Activated CD4-positive, alpha-beta T cell treated with anti-CD3 and anti-CD28 coated beads, Interleukin-2, amount 10 ng/mL, durations not matched to agents 24 days and 14 days (primary cell): ENCODE measurements at regions of chr1 and their contacts with region 1.

Region 1: GRCh38 chr1:67685067-67685557 is at the start of gene GADD45A:
- DNase-seq: peak; percentile 99
- H3K4me3 Mint-ChIP-seq: peak within 1 kb of the TSS; percentile 91
- H3K27ac Mint-ChIP-seq: peak within 1 kb of the TSS; percentile 96
- H3K4me1 Mint-ChIP-seq: peaks cover 35% of the 10 kb centered on the region
- H3K27me3 Mint-ChIP-seq: no peaks in the 10 kb centered on the region
- total RNA-seq, gene GADD45A: 33.4 and 36.7 TPM in 2 replicates

Region 2: DNA sequence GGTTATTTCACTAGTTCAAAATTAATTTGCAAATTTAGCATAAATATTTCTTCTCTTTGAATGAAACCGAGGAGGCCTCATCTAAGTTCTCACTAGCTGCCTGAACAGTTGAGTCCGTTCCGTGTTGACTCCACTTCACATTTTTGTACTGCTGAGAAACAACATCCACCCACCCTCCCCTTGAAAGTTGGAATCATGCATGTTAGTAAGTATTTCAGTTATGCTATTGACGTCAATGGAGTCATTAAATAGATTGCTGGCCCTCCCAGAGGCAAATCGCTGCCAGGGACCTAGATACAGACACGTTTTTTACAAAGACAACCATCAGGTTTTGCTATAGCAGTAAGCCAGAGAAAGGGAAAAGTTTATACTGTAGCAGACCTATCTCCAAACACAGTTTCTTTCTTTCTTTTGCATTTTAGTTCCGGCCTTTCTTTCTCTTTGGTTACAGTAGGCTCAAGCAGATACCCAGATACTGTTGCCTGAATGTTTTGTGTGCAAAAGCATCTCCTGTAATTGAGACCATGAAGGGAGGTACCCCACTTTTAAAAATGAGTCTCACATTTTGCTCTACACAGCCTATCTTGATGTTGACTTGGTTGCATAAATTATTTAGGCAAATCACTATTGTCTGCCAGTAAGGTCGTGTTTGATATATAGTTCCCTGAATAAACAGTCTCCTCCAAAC is 1413.8 kb before region 1 on chr1:
- intact Hi-C with region 1: loop called (anchors 10 kb)
- DNase-seq: peak; percentile 81
- H3K4me3 Mint-ChIP-seq: peak overlapping the region; percentile 67
- H3K27ac Mint-ChIP-seq: peak overlapping the region; percentile 88
- H3K4me1 Mint-ChIP-seq: peaks cover 62% of the 10 kb centered on the region
- H3K27me3 Mint-ChIP-seq: no peaks in the 10 kb centered on the region

Region 3: GRCh38 chr1:67053785-67054772 is 631.0 kb before region 1 on chr1 and contains the start of gene SLC35D1:
- intact Hi-C with region 1: loop called (anchors 10 kb)
- DNase-seq: peak; percentile 94
- H3K4me3 Mint-ChIP-seq: peak within 1 kb of the TSS; percentile 86
- H3K27ac Mint-ChIP-seq: peak within 1 kb of the TSS; percentile 95
- H3K4me1 Mint-ChIP-seq: peaks cover 28% of the 10 kb centered on the region
- H3K27me3 Mint-ChIP-seq: peaks cover 10% of the 10 kb centered on the region
- total RNA-seq, gene SLC35D1: 15.9 and 16.1 TPM in 2 replicates

Region 4: DNA sequence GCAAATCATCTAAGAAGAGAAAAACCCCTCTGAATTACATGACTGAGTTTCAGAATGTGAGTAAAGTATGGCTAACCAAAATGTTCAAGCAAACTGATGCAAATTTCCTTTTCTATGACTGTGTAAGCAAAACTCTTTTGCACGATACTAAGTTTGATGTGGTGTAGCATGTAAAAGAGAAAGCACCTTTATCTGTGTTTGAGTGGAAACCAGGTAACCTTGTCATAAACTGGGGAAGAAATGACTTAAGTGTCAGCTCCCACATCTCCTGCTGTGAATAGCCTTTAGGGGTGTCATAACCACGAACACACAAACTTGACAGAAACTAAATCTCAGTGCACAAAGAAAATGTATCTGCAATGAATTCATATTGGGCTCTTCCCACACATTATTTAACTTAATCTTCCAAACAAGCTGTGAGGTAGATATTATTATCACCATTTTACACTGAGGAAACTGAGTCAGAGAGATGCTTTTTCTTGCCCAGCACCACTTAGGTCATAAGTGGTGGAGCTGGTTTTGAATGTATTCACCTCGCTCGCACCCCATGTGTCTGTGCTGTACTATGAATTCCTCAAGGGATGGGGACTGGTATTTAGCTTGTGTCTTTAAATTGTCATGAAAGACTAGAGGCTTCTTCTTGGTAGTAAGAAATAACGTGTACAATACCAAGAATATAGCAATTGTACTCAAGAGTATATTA is 410.3 kb before region 1 on chr1:
- intact Hi-C with region 1: loop called (anchors 1 kb)
- DNase-seq: peak; percentile 85
- H3K4me3 Mint-ChIP-seq: no peak overlapping the region
- H3K27ac Mint-ChIP-seq: peak overlapping the region; percentile 76
- H3K4me1 Mint-ChIP-seq: peaks cover 43% of the 10 kb centered on the region
- H3K27me3 Mint-ChIP-seq: no peaks in the 10 kb centered on the region

Region 5: DNA sequence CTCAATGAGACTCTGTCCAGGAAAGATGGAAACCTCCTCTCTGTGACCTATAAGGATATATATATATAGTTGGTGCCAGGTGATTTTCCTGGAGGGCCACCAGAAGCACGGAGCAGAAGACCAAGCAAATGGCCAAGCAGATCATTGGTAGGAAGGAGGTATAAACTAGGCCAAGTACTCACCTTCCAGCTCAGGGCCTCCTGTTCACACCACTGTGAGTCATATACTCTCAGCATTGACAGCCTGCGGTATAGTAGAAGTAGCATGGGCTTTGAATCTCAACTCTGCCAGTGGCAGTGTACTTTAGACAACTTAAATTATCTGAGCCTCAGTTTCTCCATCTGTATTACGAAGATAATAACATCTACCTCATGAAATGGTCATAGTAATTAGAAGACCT is 362.0 kb before region 1 on chr1:
- intact Hi-C with region 1: no loop called
- DNase-seq: no peak
- H3K4me3 Mint-ChIP-seq: no peak overlapping the region
- H3K27ac Mint-ChIP-seq: peak overlapping the region; percentile 47
- H3K4me1 Mint-ChIP-seq: peaks cover 50% of the 10 kb centered on the region
- H3K27me3 Mint-ChIP-seq: no peaks in the 10 kb centered on the region

Region 6: GRCh38 chr1:67430352-67431155 is 254.6 kb before region 1 on chr1 and contains the start of gene SERBP1:
- intact Hi-C with region 1: loop called (anchors 1 kb)
- DNase-seq: peak; percentile 99
- H3K4me3 Mint-ChIP-seq: peak within 1 kb of the TSS; percentile 95
- H3K27ac Mint-ChIP-seq: peak within 1 kb of the TSS; percentile 98
- H3K4me1 Mint-ChIP-seq: peaks cover 47% of the 10 kb centered on the region
- H3K27me3 Mint-ChIP-seq: no peaks in the 10 kb centered on the region
- total RNA-seq, gene SERBP1: 619 and 630 TPM in 2 replicates

Region 7: GRCh38 chr1:67723620-67724019 is 38.5 kb after region 1 on chr1:
- intact Hi-C with region 1: loop called (anchors 1 kb)
- DNase-seq: no peak
- H3K4me3 Mint-ChIP-seq: no peak overlapping the region
- H3K27ac Mint-ChIP-seq: no peak overlapping the region
- H3K4me1 Mint-ChIP-seq: peaks cover 6% of the 10 kb centered on the region
- H3K27me3 Mint-ChIP-seq: peaks cover 5% of the 10 kb centered on the region

Region 8: GRCh38 chr1:67760030-67760821 is 75.1 kb after region 1 on chr1:
- intact Hi-C with region 1: loop called (anchors 2 kb)
- DNase-seq: peak; percentile 85
- H3K4me3 Mint-ChIP-seq: no peak overlapping the region
- H3K27ac Mint-ChIP-seq: no peak overlapping the region
- H3K4me1 Mint-ChIP-seq: peaks cover 3% of the 10 kb centered on the region
- H3K27me3 Mint-ChIP-seq: peaks cover 23% of the 10 kb centered on the region